PC-9 (cell line): ENCODE measurements at regions of chr7 and their contacts with region 1.

Region 1: GRCh38 chr7:40833888-40834234 is 699.1 kb downstream of the SUGCT start:
- DNase-seq: no peak
- H3K4me3 ChIP-seq: no peak overlapping the region
- H3K27ac ChIP-seq: no peak overlapping the region
- H3K4me1 ChIP-seq: no peaks in the 10 kb centered on the region
- H3K27me3 ChIP-seq: no peaks in the 10 kb centered on the region
- CTCF ChIP-seq: peak; percentile 60

Region 2: GRCh38 chr7:40765639-40766038 is 68.2 kb before region 1 on chr7:
- CTCF ChIA-PET with region 1: no interaction called
- POLR2A ChIA-PET with region 1: no interaction called
- intact Hi-C with region 1: no loop called
- DNase-seq: no peak
- H3K4me3 ChIP-seq: no peak overlapping the region
- H3K27ac ChIP-seq: no peak overlapping the region
- H3K4me1 ChIP-seq: no peaks in the 10 kb centered on the region
- H3K27me3 ChIP-seq: no peaks in the 10 kb centered on the region
- CTCF ChIP-seq: no peak

Region 3: GRCh38 chr7:40780460-40780859 is 53.4 kb before region 1 on chr7:
- CTCF ChIA-PET with region 1: no interaction called
- POLR2A ChIA-PET with region 1: no interaction called
- intact Hi-C with region 1: no loop called
- DNase-seq: no peak
- H3K4me3 ChIP-seq: no peak overlapping the region
- H3K27ac ChIP-seq: no peak overlapping the region
- H3K4me1 ChIP-seq: no peaks in the 10 kb centered on the region
- H3K27me3 ChIP-seq: no peaks in the 10 kb centered on the region
- CTCF ChIP-seq: no peak

Region 4: DNA sequence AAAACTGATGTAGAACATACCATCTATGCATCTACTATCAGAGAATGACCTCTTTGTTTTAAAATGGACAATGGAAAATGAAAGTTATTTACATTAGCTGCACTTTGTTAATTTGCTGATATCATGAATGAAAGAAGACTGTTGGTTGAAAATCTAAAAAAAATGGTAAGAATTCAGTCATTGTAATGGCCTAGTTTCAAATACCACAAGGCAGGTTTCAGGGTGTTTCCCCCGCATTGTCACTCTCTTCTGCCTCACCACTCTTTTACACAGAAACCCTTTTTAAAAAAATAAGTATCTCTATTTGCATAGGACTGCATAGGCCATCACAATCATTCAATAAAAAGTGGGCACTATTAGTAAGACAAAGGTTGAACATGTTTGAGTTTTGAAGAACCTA is 131.9 kb after region 1 on chr7:
- CTCF ChIA-PET with region 1: interaction called, 11 read pairs
- POLR2A ChIA-PET with region 1: no interaction called
- intact Hi-C with region 1: no loop called
- DNase-seq: no peak
- H3K4me3 ChIP-seq: no peak overlapping the region
- H3K27ac ChIP-seq: no peak overlapping the region
- H3K4me1 ChIP-seq: 0 out of 2 replicates have a peak, but pooled peaks cover 5% of the 10 kb centered on the region
- H3K27me3 ChIP-seq: no peaks in the 10 kb centered on the region
- CTCF ChIP-seq: no peak